Sigmoid colon (tissue), 7 donors: ENCODE measurements at regions of chr7 and their contacts with region 1.

Region 1: GRCh38 chr7:142088022-142088714 is 23.4 kb upstream of the MGAM2 start:
- DNase-seq: no peak
- H3K4me3 ChIP-seq: no peak overlapping the region
- H3K27ac ChIP-seq: no peak overlapping the region
- H3K4me1 ChIP-seq: no peaks in the 10 kb centered on the region
- H3K27me3 ChIP-seq: no peaks in the 10 kb centered on the region
- CTCF ChIP-seq: no peak
- EP300 ChIP-seq: no peak
- POLR2A ChIP-seq: no peak

Region 2: DNA sequence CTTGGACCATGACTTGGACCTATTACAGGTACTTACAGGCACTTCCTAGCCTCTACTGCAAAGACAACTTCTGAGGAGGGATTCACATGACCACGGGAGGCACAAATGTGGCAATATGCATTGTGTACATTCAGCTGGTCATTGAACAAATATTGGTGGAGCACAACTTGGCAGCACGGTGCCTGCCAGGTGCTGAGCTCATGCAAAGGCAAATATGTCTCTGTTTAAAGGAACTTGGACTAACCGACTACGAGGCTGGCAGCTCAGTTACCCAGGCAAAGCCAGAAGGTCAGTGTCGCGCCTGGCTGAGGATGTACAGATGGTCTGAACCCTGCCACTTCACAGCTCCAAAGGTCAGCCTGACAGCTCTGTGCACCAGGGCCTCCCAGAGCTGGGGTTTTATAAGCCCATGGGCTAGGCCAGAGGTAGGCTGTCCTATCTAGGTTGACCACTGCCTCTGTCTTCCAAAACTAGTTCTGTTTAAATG is 392.3 kb before region 1 on chr7:
- intact Hi-C with region 1: no loop called
- DNase-seq: no peak
- H3K4me3 ChIP-seq: no peak overlapping the region
- H3K27ac ChIP-seq: no peak overlapping the region
- H3K4me1 ChIP-seq: peaks cover 0 to 10% (median 10%) of the 10 kb centered on the region in 4 donors
- H3K27me3 ChIP-seq: no peaks in the 10 kb centered on the region
- CTCF ChIP-seq: no peak
- EP300 ChIP-seq: no peak
- POLR2A ChIP-seq: no peak

Region 3: GRCh38 chr7:141906285-141906684 is 181.9 kb before region 1 on chr7:
- intact Hi-C with region 1: no loop called
- DNase-seq: no peak
- H3K4me3 ChIP-seq: no peak overlapping the region
- H3K27ac ChIP-seq: no peak overlapping the region
- H3K4me1 ChIP-seq: no peaks in the 10 kb centered on the region
- H3K27me3 ChIP-seq: no peaks in the 10 kb centered on the region
- CTCF ChIP-seq: no peak
- EP300 ChIP-seq: no peak
- POLR2A ChIP-seq: no peak

Region 4: DNA sequence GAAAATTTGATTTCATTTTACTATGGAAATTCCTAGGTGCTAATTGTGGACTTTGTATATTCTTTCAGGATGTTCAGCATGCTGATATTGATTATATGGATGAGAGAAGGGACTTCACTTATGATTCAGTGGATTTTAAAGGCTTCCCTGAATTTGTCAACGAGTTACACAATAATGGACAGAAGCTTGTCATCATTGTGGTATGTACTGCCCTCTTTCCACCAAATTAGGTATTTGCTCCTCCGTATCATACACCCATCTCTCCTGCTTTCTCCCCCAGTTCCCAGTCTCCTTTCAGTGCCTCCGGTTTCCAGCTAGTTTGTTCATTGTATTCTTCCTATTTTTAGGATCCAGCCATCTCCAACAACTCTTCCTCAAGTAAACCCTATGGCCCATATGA is 57.9 kb before region 1 on chr7:
- intact Hi-C with region 1: no loop called
- DNase-seq: no peak
- H3K4me3 ChIP-seq: no peak overlapping the region
- H3K27ac ChIP-seq: no peak overlapping the region
- H3K4me1 ChIP-seq: no peaks in the 10 kb centered on the region
- H3K27me3 ChIP-seq: no peaks in the 10 kb centered on the region
- CTCF ChIP-seq: no peak
- EP300 ChIP-seq: no peak
- POLR2A ChIP-seq: no peak

Region 5: GRCh38 chr7:142060936-142061335 is 27.2 kb before region 1 on chr7:
- intact Hi-C with region 1: loop called (anchors 1 kb)
- DNase-seq: no peak
- H3K4me3 ChIP-seq: no peak overlapping the region
- H3K27ac ChIP-seq: no peak overlapping the region
- H3K4me1 ChIP-seq: no peaks in the 10 kb centered on the region
- H3K27me3 ChIP-seq: no peaks in the 10 kb centered on the region
- CTCF ChIP-seq: no peak
- EP300 ChIP-seq: no peak
- POLR2A ChIP-seq: no peak